Common myeloid progenitor, CD34-positive (primary cell): ENCODE measurements at regions of chr3 and their contacts with region 1.

Region 1: GRCh38 chr3:119276680-119277079 is 17.5 kb upstream of the ARHGAP31 start:
- DNase-seq: no peak
- H3K4me3 ChIP-seq: no peak overlapping the region
- H3K27ac ChIP-seq: no peak overlapping the region
- H3K4me1 ChIP-seq: no peaks in the 10 kb centered on the region
- H3K27me3 ChIP-seq: no peaks in the 10 kb centered on the region

Region 2: GRCh38 chr3:119227070-119227850 is 49.4 kb before region 1 on chr3:
- CTCF ChIA-PET with region 1: no interaction called
- POLR2A ChIA-PET with region 1: no interaction called
- DNase-seq: no peak
- H3K4me3 ChIP-seq: no peak overlapping the region
- H3K27ac ChIP-seq: no peak overlapping the region
- H3K4me1 ChIP-seq: no peaks in the 10 kb centered on the region
- H3K27me3 ChIP-seq: no peaks in the 10 kb centered on the region

Region 3: GRCh38 chr3:119293871-119294695 is 17.4 kb after region 1 on chr3 and contains the start of gene ARHGAP31:
- CTCF ChIA-PET with region 1: interaction called, 24 read pairs
- POLR2A ChIA-PET with region 1: no interaction called
- DNase-seq: peak; percentile 68 to 92 (median 90)
- H3K4me3 ChIP-seq: peak within 1 kb of the TSS; percentile 66 to 93 (median 73)
- H3K27ac ChIP-seq: peak within 1 kb of the TSS in 1 of 2 experiments; percentile 69
- H3K4me1 ChIP-seq: peaks cover 8 to 72% (median 45%) of the 10 kb centered on the region in 4 experiments
- H3K27me3 ChIP-seq: no peaks in the 10 kb centered on the region

Region 4: GRCh38 chr3:119329551-119329950 is 52.9 kb after region 1 on chr3:
- CTCF ChIA-PET with region 1: interaction called, 11 read pairs
- POLR2A ChIA-PET with region 1: no interaction called
- DNase-seq: no peak
- H3K4me3 ChIP-seq: no peak overlapping the region
- H3K27ac ChIP-seq: no peak overlapping the region
- H3K4me1 ChIP-seq: peaks cover 0 to 10% (median 0%) of the 10 kb centered on the region in 4 experiments
- H3K27me3 ChIP-seq: no peaks in the 10 kb centered on the region